ENCODE measurements at regions of chr7 and their contacts with region 1.

Region 1: GRCh38 chr7:81499262-81500116 is 270.4 kb downstream of the HGF start:
- DNase-seq: peak; percentile 28
- ATAC-seq: peak; percentile 91
- H3K4me3 ChIP-seq: no peak overlapping the region
- H3K27ac ChIP-seq: no peak overlapping the region
- H3K4me1 ChIP-seq: no peaks in the 10 kb centered on the region
- H3K27me3 ChIP-seq: no peaks in the 10 kb centered on the region; a peak in 1 of 4 replicates
- CTCF ChIP-seq: peak; percentile 40 to 72 (median 62); a peak in 5 of 6 replicates
- EP300 ChIP-seq: no peak
- POLR2A ChIP-seq: no peak
- RAD21 ChIP-seq: peak; percentile 91

Region 2: GRCh38 chr7:81482600-81483186 is 16.8 kb before region 1 on chr7:
- CTCF ChIA-PET with region 1: interaction called, 62 read pairs
- POLR2A ChIA-PET with region 1: no interaction called
- RAD21 ChIA-PET with region 1: interaction called, 48 read pairs
- SMC1A ChIA-PET with region 1: interaction called, 43 read pairs
- in situ Hi-C with region 1: no loop called
- intact Hi-C with region 1: no loop called
- DNase-seq: no peak
- ATAC-seq: peak; percentile 65
- H3K4me3 ChIP-seq: no peak overlapping the region
- H3K27ac ChIP-seq: no peak overlapping the region
- H3K4me1 ChIP-seq: no peaks in the 10 kb centered on the region
- H3K27me3 ChIP-seq: no peaks in the 10 kb centered on the region
- CTCF ChIP-seq: peak; percentile 36 to 58 (median 43); a peak in 4 of 6 replicates
- EP300 ChIP-seq: no peak
- POLR2A ChIP-seq: no peak
- RAD21 ChIP-seq: peak; percentile 53; the same call in 1 of the 2 replicates

Region 3: DNA sequence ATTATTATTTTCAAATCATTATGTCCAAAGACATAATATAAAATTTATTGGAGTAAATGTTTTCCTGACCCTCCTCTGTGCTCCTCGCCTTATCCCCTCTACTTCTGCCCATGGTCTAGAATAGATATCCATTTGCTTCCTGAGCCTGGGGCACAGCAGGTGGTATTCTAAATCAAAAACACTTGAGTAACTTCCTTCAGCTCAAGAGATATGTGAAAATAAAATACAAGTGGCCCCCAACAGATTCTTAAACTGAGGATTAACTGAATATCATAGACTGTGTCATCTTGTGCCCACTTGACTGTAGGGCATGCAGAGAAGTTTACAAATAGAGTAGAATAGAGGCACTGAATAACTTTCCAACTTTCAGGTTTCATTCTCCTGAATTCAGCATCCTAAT is 211.3 kb after region 1 on chr7:
- CTCF ChIA-PET with region 1: interaction called, 79 read pairs
- POLR2A ChIA-PET with region 1: no interaction called
- RAD21 ChIA-PET with region 1: interaction called, 56 read pairs
- SMC1A ChIA-PET with region 1: interaction called, 59 read pairs
- in situ Hi-C with region 1: loop called (anchors 25 kb)
- intact Hi-C with region 1: no loop called
- DNase-seq: no peak
- ATAC-seq: no peak
- H3K4me3 ChIP-seq: no peak overlapping the region
- H3K27ac ChIP-seq: no peak overlapping the region
- H3K4me1 ChIP-seq: no peaks in the 10 kb centered on the region
- H3K27me3 ChIP-seq: no peaks in the 10 kb centered on the region
- CTCF ChIP-seq: no peak
- EP300 ChIP-seq: no peak
- POLR2A ChIP-seq: no peak
- RAD21 ChIP-seq: no peak

Region 4: GRCh38 chr7:81873559-81873958 is 374.1 kb after region 1 on chr7:
- CTCF ChIA-PET with region 1: no interaction called
- POLR2A ChIA-PET with region 1: no interaction called
- RAD21 ChIA-PET with region 1: no interaction called
- SMC1A ChIA-PET with region 1: interaction called, 3 read pairs
- in situ Hi-C with region 1: no loop called
- intact Hi-C with region 1: loop called (anchors 2 kb)
- DNase-seq: peak; percentile 31
- ATAC-seq: peak; percentile 75
- H3K4me3 ChIP-seq: no peak overlapping the region
- H3K27ac ChIP-seq: peak overlapping the region; percentile 84
- H3K4me1 ChIP-seq: peaks cover 9% of the 10 kb centered on the region
- H3K27me3 ChIP-seq: no peaks in the 10 kb centered on the region
- CTCF ChIP-seq: no peak
- EP300 ChIP-seq: peak; percentile 57 to 66; a peak in 2 of 4 replicates
- POLR2A ChIP-seq: no peak
- RAD21 ChIP-seq: no peak

Region 5: GRCh38 chr7:82036146-82036886 is 536.8 kb after region 1 on chr7:
- CTCF ChIA-PET with region 1: interaction called, 22 read pairs
- POLR2A ChIA-PET with region 1: no interaction called
- RAD21 ChIA-PET with region 1: interaction called, 13 read pairs
- SMC1A ChIA-PET with region 1: interaction called, 37 read pairs
- in situ Hi-C with region 1: no loop called
- intact Hi-C with region 1: no loop called
- DNase-seq: no peak
- ATAC-seq: peak; percentile 18; the same call in 2 of the 3 replicates
- H3K4me3 ChIP-seq: no peak overlapping the region
- H3K27ac ChIP-seq: no peak overlapping the region
- H3K4me1 ChIP-seq: no peaks in the 10 kb centered on the region
- H3K27me3 ChIP-seq: no peaks in the 10 kb centered on the region
- CTCF ChIP-seq: no peak
- EP300 ChIP-seq: no peak
- POLR2A ChIP-seq: no peak
- RAD21 ChIP-seq: no peak

Region 6: DNA sequence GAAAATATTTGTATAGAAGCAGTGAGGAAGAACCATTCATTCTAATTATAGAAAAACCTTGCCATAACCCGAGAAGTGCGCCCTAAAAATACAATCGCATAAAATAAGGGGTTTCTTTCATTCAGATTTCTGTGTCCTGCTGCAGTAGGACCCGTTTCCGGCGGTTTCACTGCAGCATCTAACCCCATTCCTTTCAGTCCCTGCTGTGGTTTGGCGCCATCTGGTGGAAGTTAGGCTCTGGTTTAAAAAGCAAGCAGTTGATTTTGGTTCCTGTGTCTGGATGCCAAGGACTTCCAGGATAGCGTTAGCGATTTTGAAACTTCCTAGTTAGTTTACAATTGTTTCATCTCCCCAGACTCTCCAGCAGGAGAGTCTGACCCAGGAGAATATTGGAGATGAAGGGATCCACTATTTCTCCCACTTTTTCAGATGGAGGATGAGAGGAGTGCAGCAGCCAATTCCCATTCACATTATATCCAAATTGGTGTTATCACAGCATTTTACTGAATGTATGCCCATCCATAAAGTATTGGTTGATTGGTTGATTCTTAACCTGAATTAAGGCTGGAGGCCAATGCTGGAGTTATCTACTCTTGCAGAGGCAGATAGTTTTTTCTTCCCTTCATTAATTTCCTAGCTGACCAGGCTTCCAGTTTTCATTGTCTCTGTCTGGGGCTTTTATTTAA is 1072.8 kb after region 1 on chr7:
- CTCF ChIA-PET with region 1: interaction called, 4 read pairs
- POLR2A ChIA-PET with region 1: no interaction called
- RAD21 ChIA-PET with region 1: interaction called, 3 read pairs
- SMC1A ChIA-PET with region 1: interaction called, 13 read pairs
- in situ Hi-C with region 1: no loop called
- intact Hi-C with region 1: no loop called
- DNase-seq: peak; percentile 11
- ATAC-seq: peak; percentile 77
- H3K4me3 ChIP-seq: no peak overlapping the region
- H3K27ac ChIP-seq: no peak overlapping the region
- H3K4me1 ChIP-seq: no peaks in the 10 kb centered on the region
- H3K27me3 ChIP-seq: no peaks in the 10 kb centered on the region
- CTCF ChIP-seq: peak; percentile 79 to 89 (median 85)
- EP300 ChIP-seq: no peak
- POLR2A ChIP-seq: no peak
- RAD21 ChIP-seq: peak; percentile 92

Region 7: DNA sequence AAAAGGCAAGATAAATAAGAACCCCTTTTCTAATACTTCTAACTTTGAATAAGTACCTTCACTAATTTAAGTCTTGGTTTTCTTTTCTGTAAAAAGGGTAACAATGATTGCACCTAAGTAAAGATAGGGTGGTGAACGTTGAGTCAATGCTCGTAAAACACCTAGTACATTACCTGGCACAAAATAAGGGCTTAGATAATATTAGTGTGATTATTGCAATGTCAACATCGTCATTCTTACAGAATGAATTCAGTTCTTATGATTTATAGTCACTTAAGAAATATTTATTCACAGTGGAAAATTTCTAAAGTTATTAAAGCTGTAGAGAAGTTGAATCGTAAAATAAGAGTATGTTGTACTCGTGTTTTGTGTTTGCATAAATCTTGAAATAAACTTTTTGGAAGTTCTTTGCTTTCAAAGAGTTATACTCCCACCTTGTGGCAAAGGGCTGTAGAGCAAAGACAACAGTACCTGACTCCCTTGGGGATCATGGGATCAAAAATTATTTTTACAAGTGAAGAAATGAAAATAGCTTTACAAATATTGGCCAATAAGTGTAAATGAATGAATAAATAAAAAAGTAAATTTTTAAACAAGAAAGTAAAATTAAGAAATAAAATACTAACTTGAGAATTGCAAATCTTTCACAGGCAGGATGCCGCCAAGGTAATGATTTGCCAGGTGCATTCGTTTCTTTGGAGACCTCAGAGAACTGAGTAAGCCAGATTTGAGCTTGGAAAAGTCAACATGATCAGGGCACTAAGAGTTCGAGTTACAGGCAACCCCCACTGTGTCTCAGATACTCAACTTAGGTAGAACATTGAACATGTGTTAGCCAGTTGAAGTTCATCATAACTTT is 1229.9 kb after region 1 on chr7:
- CTCF ChIA-PET with region 1: interaction called, 56 read pairs
- POLR2A ChIA-PET with region 1: no interaction called
- RAD21 ChIA-PET with region 1: interaction called, 15 read pairs
- SMC1A ChIA-PET with region 1: interaction called, 37 read pairs
- in situ Hi-C with region 1: no loop called
- intact Hi-C with region 1: loop called (anchors 5 kb)
- DNase-seq: no peak
- ATAC-seq: peak; percentile 56; the same call in 2 of the 3 replicates
- H3K4me3 ChIP-seq: no peak overlapping the region
- H3K27ac ChIP-seq: no peak overlapping the region
- H3K4me1 ChIP-seq: no peaks in the 10 kb centered on the region
- H3K27me3 ChIP-seq: no peaks in the 10 kb centered on the region
- CTCF ChIP-seq: peak; percentile 55 to 72 (median 56)
- EP300 ChIP-seq: no peak
- POLR2A ChIP-seq: no peak
- RAD21 ChIP-seq: peak; percentile 80

Measured in GM12878 (cell line).